Dendritic cell treated with granulocyte-macrophage colony-stimulating factor and Interleukin-4, amounts not matched to agents 40 ng/mL and 50 ng/mL, for 4 days (primary cell): ENCODE measurements at regions of chr1 and their contacts with region 1.

Region 1: GRCh38 chr1:13622446-13622845 is 38.8 kb downstream of the PDPN start:
- H3K4me3 Mint-ChIP-seq: no peak overlapping the region
- H3K27ac Mint-ChIP-seq: no peak overlapping the region
- H3K4me1 Mint-ChIP-seq: peaks cover 15% of the 10 kb centered on the region
- H3K27me3 Mint-ChIP-seq: peaks cover 14% of the 10 kb centered on the region

Region 2: GRCh38 chr1:13642306-13643004 is 20.0 kb after region 1 on chr1:
- intact Hi-C with region 1: loop called (anchors 1 kb)
- H3K4me3 Mint-ChIP-seq: no peak overlapping the region
- H3K27ac Mint-ChIP-seq: no peak overlapping the region
- H3K4me1 Mint-ChIP-seq: peaks cover 11% of the 10 kb centered on the region
- H3K27me3 Mint-ChIP-seq: peaks cover 6% of the 10 kb centered on the region

Region 3: DNA sequence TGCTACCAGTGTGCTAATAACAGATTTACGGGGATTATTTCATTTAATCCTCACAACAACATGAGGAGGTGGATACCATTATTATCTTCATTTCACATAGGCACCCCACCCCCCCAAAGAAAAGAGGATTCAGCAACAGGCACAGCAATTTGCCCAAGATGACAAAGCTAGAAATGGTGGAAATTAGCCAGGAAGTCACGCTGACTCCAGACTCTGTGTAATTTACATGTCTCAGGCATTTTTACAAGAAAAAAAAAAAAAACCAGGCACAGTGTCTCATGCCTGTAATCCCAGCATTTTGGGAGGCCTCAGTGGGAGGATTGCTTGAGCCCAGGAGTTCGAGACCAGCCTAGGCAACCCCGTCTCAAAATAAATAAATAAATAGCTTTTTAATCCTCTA is 40.0 kb after region 1 on chr1:
- intact Hi-C with region 1: no loop called
- H3K4me3 Mint-ChIP-seq: no peak overlapping the region
- H3K27ac Mint-ChIP-seq: peak overlapping the region; percentile 60
- H3K4me1 Mint-ChIP-seq: peaks cover 31% of the 10 kb centered on the region
- H3K27me3 Mint-ChIP-seq: no peaks in the 10 kb centered on the region